GM12878 (cell line): ENCODE measurements at regions of chr2 and their contacts with region 1.

Region 1: GRCh38 chr2:174341286-174341994 is 6.7 kb downstream of the SP9 start:
- DNase-seq: peak; percentile 30
- ATAC-seq: peak; percentile 88
- H3K4me3 ChIP-seq: peak overlapping the region; percentile 32; the same call in 1 of the 2 replicates
- H3K27ac ChIP-seq: no peak overlapping the region
- H3K4me1 ChIP-seq: peaks cover 16% of the 10 kb centered on the region
- H3K27me3 ChIP-seq: peaks cover 11 to 41% of the 10 kb centered on the region in 2 experiments
- CTCF ChIP-seq: peak; percentile 93 to 99 (median 98); a peak in 5 of 6 replicates
- EP300 ChIP-seq: no peak
- POLR2A ChIP-seq: no peak
- RAD21 ChIP-seq: peak; percentile 94

Region 2: GRCh38 chr2:173402405-173402974 is 939.0 kb before region 1 on chr2:
- CTCF ChIA-PET with region 1: interaction called, 37 read pairs
- POLR2A ChIA-PET with region 1: no interaction called
- RAD21 ChIA-PET with region 1: interaction called, 22 read pairs
- SMC1A ChIA-PET with region 1: interaction called, 9 read pairs
- in situ Hi-C with region 1: loop called (anchors 5 kb)
- intact Hi-C with region 1: loop called (anchors 1 kb)
- DNase-seq: peak; percentile 15
- ATAC-seq: peak; percentile 99
- H3K4me3 ChIP-seq: no peak overlapping the region
- H3K27ac ChIP-seq: no peak overlapping the region
- H3K4me1 ChIP-seq: no peaks in the 10 kb centered on the region
- H3K27me3 ChIP-seq: peaks cover 1 to 6% of the 10 kb centered on the region in 2 experiments; a peak in 3 of 4 replicates
- CTCF ChIP-seq: peak; percentile 81 to 94 (median 88)
- EP300 ChIP-seq: no peak
- POLR2A ChIP-seq: no peak
- RAD21 ChIP-seq: peak; percentile 93

Region 3: GRCh38 chr2:173752152-173752551 is 589.3 kb before region 1 on chr2:
- CTCF ChIA-PET with region 1: interaction called, 3 read pairs
- POLR2A ChIA-PET with region 1: no interaction called
- RAD21 ChIA-PET with region 1: no interaction called
- SMC1A ChIA-PET with region 1: no interaction called
- in situ Hi-C with region 1: no loop called
- intact Hi-C with region 1: loop called (anchors 10 kb)
- DNase-seq: no peak
- ATAC-seq: peak; percentile 61
- H3K4me3 ChIP-seq: no peak overlapping the region
- H3K27ac ChIP-seq: no peak overlapping the region
- H3K4me1 ChIP-seq: no peaks in the 10 kb centered on the region
- H3K27me3 ChIP-seq: no peaks in the 10 kb centered on the region; a peak in 1 of 4 replicates
- CTCF ChIP-seq: peak; percentile 29 to 31 (median 30); a peak in 2 of 6 replicates
- EP300 ChIP-seq: no peak
- POLR2A ChIP-seq: no peak
- RAD21 ChIP-seq: peak; percentile 37; the same call in 1 of the 2 replicates

Region 4: GRCh38 chr2:174080672-174081121 is 260.7 kb before region 1 on chr2:
- CTCF ChIA-PET with region 1: interaction called, 4 read pairs
- POLR2A ChIA-PET with region 1: no interaction called
- RAD21 ChIA-PET with region 1: interaction called, 3 read pairs
- SMC1A ChIA-PET with region 1: no interaction called
- in situ Hi-C with region 1: no loop called
- intact Hi-C with region 1: loop called (anchors 5 kb)
- DNase-seq: no peak
- ATAC-seq: no peak
- H3K4me3 ChIP-seq: no peak overlapping the region
- H3K27ac ChIP-seq: no peak overlapping the region
- H3K4me1 ChIP-seq: no peaks in the 10 kb centered on the region
- H3K27me3 ChIP-seq: no peaks in the 10 kb centered on the region
- CTCF ChIP-seq: no peak
- EP300 ChIP-seq: no peak
- POLR2A ChIP-seq: no peak
- RAD21 ChIP-seq: no peak

Region 5: DNA sequence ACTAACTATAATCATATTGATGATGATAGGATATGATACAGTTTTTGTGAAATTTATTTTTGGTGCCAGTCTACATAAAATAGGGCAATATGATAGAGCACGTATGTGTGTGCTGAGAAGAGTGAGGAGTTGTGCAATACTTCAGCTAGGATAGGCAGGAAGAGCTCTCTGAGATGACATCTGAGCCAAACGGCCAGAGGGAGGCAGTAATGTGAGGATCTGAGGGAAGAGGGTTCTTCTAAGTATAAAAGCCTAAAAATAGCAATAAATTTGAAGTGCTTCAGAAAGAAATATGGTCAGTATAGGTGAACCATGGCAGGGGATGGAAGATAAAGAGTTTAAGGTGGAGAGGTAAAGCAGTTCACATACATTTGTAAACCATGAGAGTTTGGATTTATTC is 195.6 kb before region 1 on chr2:
- CTCF ChIA-PET with region 1: interaction called, 20 read pairs
- POLR2A ChIA-PET with region 1: no interaction called
- RAD21 ChIA-PET with region 1: interaction called, 7 read pairs
- SMC1A ChIA-PET with region 1: interaction called, 6 read pairs
- in situ Hi-C with region 1: no loop called
- intact Hi-C with region 1: loop called (anchors 5 kb)
- DNase-seq: no peak
- ATAC-seq: peak; percentile 41; the same call in 2 of the 3 replicates
- H3K4me3 ChIP-seq: no peak overlapping the region
- H3K27ac ChIP-seq: no peak overlapping the region
- H3K4me1 ChIP-seq: no peaks in the 10 kb centered on the region
- H3K27me3 ChIP-seq: no peaks in the 10 kb centered on the region
- CTCF ChIP-seq: no peak
- EP300 ChIP-seq: no peak
- POLR2A ChIP-seq: no peak
- RAD21 ChIP-seq: no peak

Region 6: GRCh38 chr2:174326161-174327020 is 15.0 kb before region 1 on chr2:
- CTCF ChIA-PET with region 1: interaction called, 16 read pairs
- POLR2A ChIA-PET with region 1: no interaction called
- RAD21 ChIA-PET with region 1: interaction called, 4 read pairs
- SMC1A ChIA-PET with region 1: interaction called, 5 read pairs
- in situ Hi-C with region 1: no loop called
- intact Hi-C with region 1: no loop called
- DNase-seq: no peak
- ATAC-seq: peak; percentile 53
- H3K4me3 ChIP-seq: peak overlapping the region; percentile 83
- H3K27ac ChIP-seq: no peak overlapping the region
- H3K4me1 ChIP-seq: peaks cover 11% of the 10 kb centered on the region
- H3K27me3 ChIP-seq: peaks cover 11 to 27% of the 10 kb centered on the region in 2 experiments
- CTCF ChIP-seq: no peak
- EP300 ChIP-seq: no peak
- POLR2A ChIP-seq: no peak
- RAD21 ChIP-seq: no peak